ENCODE measurements at regions of chr4 and their contacts with region 1.

Region 1: GRCh38 chr4:153204247-153205027 is at the start of gene TRIM2:
- DNase-seq: peak; percentile 85 to 91
- H3K4me3 ChIP-seq: peak within 1 kb of the TSS; percentile 73
- H3K4me3 Mint-ChIP-seq: peak within 1 kb of the TSS; percentile 96
- H3K27ac Mint-ChIP-seq: peak within 1 kb of the TSS; percentile 87
- H3K4me1 ChIP-seq: peaks cover 44% of the 10 kb centered on the region
- H3K4me1 Mint-ChIP-seq: peaks cover 21% of the 10 kb centered on the region
- H3K27me3 ChIP-seq: no peaks in the 10 kb centered on the region
- H3K27me3 Mint-ChIP-seq: no peaks in the 10 kb centered on the region
- CTCF ChIP-seq: no peak
- total RNA-seq, gene TRIM2: 62.0 and 62.3 TPM in 2 replicates

Region 2: DNA sequence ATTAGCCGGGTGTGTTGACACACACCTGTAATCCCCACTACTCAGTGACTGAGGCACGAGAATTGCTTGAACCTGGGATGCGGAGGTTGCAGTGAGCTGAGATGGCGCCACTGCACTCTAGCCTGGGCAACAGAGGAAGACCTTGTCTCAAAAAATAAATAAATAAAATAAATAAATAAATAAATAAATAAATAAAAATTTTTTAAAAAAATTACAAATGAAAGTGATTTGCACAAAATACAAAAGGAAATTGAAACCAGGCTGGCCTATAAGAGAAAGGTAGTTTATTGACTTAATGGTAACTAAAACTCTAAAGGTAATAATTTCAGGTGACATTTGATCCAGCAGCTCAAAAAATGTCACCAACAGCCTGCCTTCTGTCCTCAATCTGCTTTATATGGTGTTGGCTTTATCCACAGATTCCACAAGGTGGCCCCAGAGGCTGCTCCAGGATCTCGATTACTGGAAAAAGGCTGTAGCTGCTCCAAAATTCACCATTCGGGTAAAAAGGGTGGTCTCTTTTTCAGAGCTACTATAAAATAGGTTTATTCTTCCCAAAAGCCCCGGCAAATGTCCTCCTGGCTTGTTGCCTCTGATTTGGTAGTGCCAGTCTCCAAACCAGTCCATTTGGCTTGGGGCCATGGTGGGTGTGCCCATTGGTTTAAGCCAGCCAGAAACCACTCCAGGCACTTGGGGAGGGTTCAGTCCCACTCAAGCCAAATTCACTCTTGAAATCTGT is 61.6 kb before region 1 on chr4:
- CTCF ChIA-PET with region 1: interaction called, 18 read pairs
- POLR2A ChIA-PET with region 1: interaction called, 3 read pairs
- intact Hi-C with region 1: loop called (anchors 1 kb)
- DNase-seq: peak; percentile 74 to 78
- H3K4me3 ChIP-seq: no peak overlapping the region
- H3K4me3 Mint-ChIP-seq: no peak overlapping the region
- H3K27ac Mint-ChIP-seq: peak overlapping the region; percentile 53
- H3K4me1 ChIP-seq: peaks cover 8% of the 10 kb centered on the region
- H3K4me1 Mint-ChIP-seq: peaks cover 13% of the 10 kb centered on the region
- H3K27me3 ChIP-seq: no peaks in the 10 kb centered on the region
- H3K27me3 Mint-ChIP-seq: no peaks in the 10 kb centered on the region
- CTCF ChIP-seq: peak; percentile 73 to 78

Region 3: DNA sequence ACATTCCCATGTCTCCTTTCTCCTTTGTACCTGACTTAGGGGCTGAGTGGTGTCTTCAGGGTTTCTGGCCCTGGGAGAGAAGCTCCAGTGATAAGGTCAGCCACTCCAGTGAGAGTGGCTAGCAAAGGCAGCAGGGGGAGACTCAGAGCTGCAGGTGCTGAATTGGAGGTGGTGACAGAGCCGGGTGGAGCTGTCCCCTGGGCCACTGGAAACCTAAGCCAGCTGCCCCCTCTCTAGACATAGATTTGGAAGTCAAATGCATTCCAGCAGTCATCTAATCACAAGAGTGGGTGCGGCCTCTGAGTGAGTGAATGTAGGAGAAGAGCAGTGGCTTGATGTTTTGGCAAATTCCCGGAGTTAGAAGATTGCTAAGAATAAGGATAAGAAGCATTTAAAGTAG is 28.3 kb after region 1 on chr4:
- CTCF ChIA-PET with region 1: interaction called, 4 read pairs
- POLR2A ChIA-PET with region 1: no interaction called
- intact Hi-C with region 1: loop called (anchors 1 kb)
- DNase-seq: peak; percentile 68 to 71
- H3K4me3 ChIP-seq: no peak overlapping the region
- H3K4me3 Mint-ChIP-seq: no peak overlapping the region
- H3K27ac Mint-ChIP-seq: peak overlapping the region; percentile 40
- H3K4me1 ChIP-seq: peaks cover 8% of the 10 kb centered on the region
- H3K4me1 Mint-ChIP-seq: peaks cover 20% of the 10 kb centered on the region
- H3K27me3 ChIP-seq: no peaks in the 10 kb centered on the region
- H3K27me3 Mint-ChIP-seq: no peaks in the 10 kb centered on the region
- CTCF ChIP-seq: peak; percentile 48

Region 4: DNA sequence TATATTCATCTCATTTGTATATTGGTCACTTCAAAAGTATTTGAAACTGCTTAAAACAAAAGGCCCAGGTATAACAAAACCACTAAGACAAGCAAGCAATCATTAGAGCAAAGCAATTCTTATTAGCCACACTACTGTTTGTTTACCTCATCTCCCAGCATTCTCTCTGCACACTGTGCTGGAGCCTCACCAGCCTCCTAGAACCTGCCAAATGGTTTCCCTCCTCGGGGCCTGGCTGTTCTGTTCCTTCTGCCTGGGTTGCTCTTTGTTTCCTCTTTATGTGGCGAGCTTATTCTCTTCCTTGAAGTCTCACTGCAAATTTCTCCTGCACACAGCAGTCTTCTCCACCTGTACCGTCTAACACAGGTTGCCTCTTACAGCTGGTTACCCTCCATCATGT is 72.5 kb after region 1 on chr4:
- CTCF ChIA-PET with region 1: no interaction called
- POLR2A ChIA-PET with region 1: no interaction called
- intact Hi-C with region 1: loop called (anchors 5 kb)
- DNase-seq: no peak
- H3K4me3 ChIP-seq: no peak overlapping the region
- H3K4me3 Mint-ChIP-seq: no peak overlapping the region
- H3K27ac Mint-ChIP-seq: no peak overlapping the region
- H3K4me1 ChIP-seq: peaks cover 21% of the 10 kb centered on the region
- H3K4me1 Mint-ChIP-seq: peaks cover 29% of the 10 kb centered on the region
- H3K27me3 ChIP-seq: no peaks in the 10 kb centered on the region
- H3K27me3 Mint-ChIP-seq: no peaks in the 10 kb centered on the region
- CTCF ChIP-seq: no peak